ENCODE measurements at regions of chr1 and their contacts with region 1.

Region 1: GRCh38 chr1:175319418-175320230 is 127.0 kb upstream of the KIAA0040 start:
- DNase-seq: peak; percentile 45 to 83 (median 71)
- ATAC-seq: peak; percentile 86
- H3K4me3 ChIP-seq: no peak overlapping the region
- H3K4me3 Mint-ChIP-seq: no peak overlapping the region
- H3K27ac ChIP-seq: no peak overlapping the region
- H3K27ac Mint-ChIP-seq: no peak overlapping the region
- H3K4me1 ChIP-seq: peaks cover 6% of the 10 kb centered on the region
- H3K4me1 Mint-ChIP-seq: peaks cover 11% of the 10 kb centered on the region
- H3K27me3 ChIP-seq: no peaks in the 10 kb centered on the region
- H3K27me3 Mint-ChIP-seq: peaks cover 3% of the 10 kb centered on the region
- CTCF ChIP-seq: peak; percentile 86

Region 2: DNA sequence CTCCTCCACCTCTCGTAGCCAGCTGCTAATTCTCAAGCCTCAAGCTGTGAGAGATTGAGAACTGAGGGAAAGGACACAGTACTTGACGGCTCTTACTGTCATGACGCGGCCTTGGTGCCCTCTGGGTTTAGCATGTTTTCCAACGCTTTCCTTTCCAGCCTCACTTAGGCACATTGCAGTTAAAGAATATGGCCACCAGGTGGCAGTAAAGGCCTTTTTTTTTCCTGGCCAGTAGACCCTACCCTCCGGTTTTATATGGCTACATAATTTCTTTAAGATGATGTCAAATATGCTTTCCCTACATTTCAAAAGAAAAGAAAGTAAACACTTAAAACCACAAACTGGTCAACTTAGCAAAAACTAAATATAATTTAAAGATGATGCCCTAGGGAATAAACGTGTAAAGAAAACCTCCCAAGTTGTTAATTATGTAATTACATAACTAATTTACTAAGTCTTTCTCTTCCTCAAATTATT is 1899.3 kb before region 1 on chr1:
- CTCF ChIA-PET with region 1: no interaction called
- POLR2A ChIA-PET with region 1: no interaction called
- intact Hi-C with region 1: loop called in 1 of 2 experiments (anchors 5 kb)
- DNase-seq: peak; percentile 23 to 83 (median 52)
- ATAC-seq: peak; percentile 96
- H3K4me3 ChIP-seq: no peak overlapping the region
- H3K4me3 Mint-ChIP-seq: no peak overlapping the region
- H3K27ac ChIP-seq: no peak overlapping the region
- H3K27ac Mint-ChIP-seq: no peak overlapping the region
- H3K4me1 ChIP-seq: peaks cover 8% of the 10 kb centered on the region
- H3K4me1 Mint-ChIP-seq: peaks cover 7% of the 10 kb centered on the region
- H3K27me3 ChIP-seq: no peaks in the 10 kb centered on the region
- H3K27me3 Mint-ChIP-seq: no peaks in the 10 kb centered on the region
- CTCF ChIP-seq: peak; percentile 88

Region 3: GRCh38 chr1:175035865-175036264 is 283.8 kb before region 1 on chr1:
- CTCF ChIA-PET with region 1: interaction called, 3 read pairs
- POLR2A ChIA-PET with region 1: no interaction called
- intact Hi-C with region 1: loop called in 1 of 2 experiments (anchors 5 kb)
- DNase-seq: no peak
- ATAC-seq: no peak
- H3K4me3 ChIP-seq: no peak overlapping the region
- H3K4me3 Mint-ChIP-seq: no peak overlapping the region
- H3K27ac ChIP-seq: no peak overlapping the region
- H3K27ac Mint-ChIP-seq: no peak overlapping the region
- H3K4me1 ChIP-seq: no peaks in the 10 kb centered on the region
- H3K4me1 Mint-ChIP-seq: no peaks in the 10 kb centered on the region
- H3K27me3 ChIP-seq: no peaks in the 10 kb centered on the region
- H3K27me3 Mint-ChIP-seq: no peaks in the 10 kb centered on the region
- CTCF ChIP-seq: no peak

Region 4: GRCh38 chr1:175174309-175175165 is 145.1 kb before region 1 on chr1:
- CTCF ChIA-PET with region 1: interaction called, 11 read pairs
- POLR2A ChIA-PET with region 1: no interaction called
- intact Hi-C with region 1: no loop called
- DNase-seq: peak in 2 of 9 experiments; percentile 31 to 64
- ATAC-seq: no peak
- H3K4me3 ChIP-seq: no peak overlapping the region
- H3K4me3 Mint-ChIP-seq: no peak overlapping the region
- H3K27ac ChIP-seq: peak overlapping the region in 1 of 2 experiments; percentile 1
- H3K27ac Mint-ChIP-seq: peak overlapping the region; percentile 50
- H3K4me1 ChIP-seq: peaks cover 4% of the 10 kb centered on the region
- H3K4me1 Mint-ChIP-seq: peaks cover 81% of the 10 kb centered on the region
- H3K27me3 ChIP-seq: no peaks in the 10 kb centered on the region
- H3K27me3 Mint-ChIP-seq: no peaks in the 10 kb centered on the region
- CTCF ChIP-seq: no peak

Region 5: GRCh38 chr1:175244206-175244605 is 75.4 kb before region 1 on chr1:
- CTCF ChIA-PET with region 1: no interaction called
- POLR2A ChIA-PET with region 1: no interaction called
- intact Hi-C with region 1: loop called in 1 of 2 experiments (anchors 10 kb)
- DNase-seq: no peak
- ATAC-seq: no peak
- H3K4me3 ChIP-seq: no peak overlapping the region
- H3K4me3 Mint-ChIP-seq: no peak overlapping the region
- H3K27ac ChIP-seq: no peak overlapping the region
- H3K27ac Mint-ChIP-seq: no peak overlapping the region
- H3K4me1 ChIP-seq: no peaks in the 10 kb centered on the region
- H3K4me1 Mint-ChIP-seq: no peaks in the 10 kb centered on the region
- H3K27me3 ChIP-seq: no peaks in the 10 kb centered on the region
- H3K27me3 Mint-ChIP-seq: no peaks in the 10 kb centered on the region
- CTCF ChIP-seq: no peak

Region 6: DNA sequence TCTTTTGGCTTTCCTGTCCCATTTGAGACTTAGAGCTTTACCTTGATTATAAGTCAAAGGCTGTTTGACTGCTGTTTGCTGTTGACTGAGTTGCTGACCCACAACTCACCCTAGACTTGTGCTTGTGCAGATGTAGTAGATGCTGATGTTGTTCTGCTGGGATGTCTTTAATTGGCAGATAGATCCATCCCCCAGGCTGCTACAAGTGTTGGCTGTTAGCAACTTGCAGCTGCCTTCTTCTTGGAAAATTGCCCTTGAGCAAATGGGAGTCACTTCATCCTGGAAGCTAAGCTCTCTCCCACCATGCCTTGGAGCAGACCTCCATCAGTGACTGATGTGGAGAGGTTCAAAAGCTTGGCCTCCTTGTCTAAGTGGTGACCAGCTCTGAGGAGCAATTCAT is 12.3 kb after region 1 on chr1:
- CTCF ChIA-PET with region 1: interaction called, 18 read pairs
- POLR2A ChIA-PET with region 1: no interaction called
- intact Hi-C with region 1: no loop called
- DNase-seq: no peak
- ATAC-seq: no peak
- H3K4me3 ChIP-seq: no peak overlapping the region
- H3K4me3 Mint-ChIP-seq: no peak overlapping the region
- H3K27ac ChIP-seq: no peak overlapping the region
- H3K27ac Mint-ChIP-seq: no peak overlapping the region
- H3K4me1 ChIP-seq: no peaks in the 10 kb centered on the region
- H3K4me1 Mint-ChIP-seq: no peaks in the 10 kb centered on the region
- H3K27me3 ChIP-seq: no peaks in the 10 kb centered on the region
- H3K27me3 Mint-ChIP-seq: no peaks in the 10 kb centered on the region
- CTCF ChIP-seq: no peak

Region 7: GRCh38 chr1:175388285-175388684 is 68.7 kb after region 1 on chr1:
- CTCF ChIA-PET with region 1: no interaction called
- POLR2A ChIA-PET with region 1: no interaction called
- intact Hi-C with region 1: no loop called
- DNase-seq: no peak
- ATAC-seq: no peak
- H3K4me3 ChIP-seq: no peak overlapping the region
- H3K4me3 Mint-ChIP-seq: no peak overlapping the region
- H3K27ac ChIP-seq: no peak overlapping the region
- H3K27ac Mint-ChIP-seq: no peak overlapping the region
- H3K4me1 ChIP-seq: no peaks in the 10 kb centered on the region
- H3K4me1 Mint-ChIP-seq: no peaks in the 10 kb centered on the region
- H3K27me3 ChIP-seq: no peaks in the 10 kb centered on the region
- H3K27me3 Mint-ChIP-seq: peaks cover 9% of the 10 kb centered on the region
- CTCF ChIP-seq: no peak

Measured in CD8-positive, alpha-beta T cell (primary cell).